ENCODE measurements at regions of chr22 and their contacts with region 1.

Region 1: DNA sequence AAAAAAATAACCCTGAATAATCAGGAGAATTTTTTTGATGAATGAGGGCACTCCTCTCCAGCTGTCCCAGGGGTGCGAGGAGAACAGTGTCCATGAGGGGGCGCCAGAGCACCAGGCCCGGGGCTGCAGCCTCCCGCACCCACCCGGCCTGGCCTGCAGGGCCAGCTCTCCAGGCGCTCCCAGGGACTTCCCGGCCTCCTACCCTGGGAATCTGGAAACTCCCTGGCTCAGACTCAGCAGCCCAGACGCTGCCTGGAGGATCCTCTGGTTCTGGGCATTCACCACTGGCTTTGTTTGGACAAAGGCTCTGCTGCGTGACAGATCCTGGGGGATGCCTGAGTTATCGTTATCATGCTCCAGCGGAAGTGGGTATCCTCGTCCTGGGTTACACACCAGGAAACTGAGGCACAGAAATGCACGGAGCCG is 31.0 kb downstream of the MCM5 start:
- H3K4me3 Mint-ChIP-seq: no peak overlapping the region
- H3K27ac Mint-ChIP-seq: no peak overlapping the region
- H3K4me1 Mint-ChIP-seq: no peaks in the 10 kb centered on the region
- H3K27me3 Mint-ChIP-seq: no peaks in the 10 kb centered on the region

Region 2: DNA sequence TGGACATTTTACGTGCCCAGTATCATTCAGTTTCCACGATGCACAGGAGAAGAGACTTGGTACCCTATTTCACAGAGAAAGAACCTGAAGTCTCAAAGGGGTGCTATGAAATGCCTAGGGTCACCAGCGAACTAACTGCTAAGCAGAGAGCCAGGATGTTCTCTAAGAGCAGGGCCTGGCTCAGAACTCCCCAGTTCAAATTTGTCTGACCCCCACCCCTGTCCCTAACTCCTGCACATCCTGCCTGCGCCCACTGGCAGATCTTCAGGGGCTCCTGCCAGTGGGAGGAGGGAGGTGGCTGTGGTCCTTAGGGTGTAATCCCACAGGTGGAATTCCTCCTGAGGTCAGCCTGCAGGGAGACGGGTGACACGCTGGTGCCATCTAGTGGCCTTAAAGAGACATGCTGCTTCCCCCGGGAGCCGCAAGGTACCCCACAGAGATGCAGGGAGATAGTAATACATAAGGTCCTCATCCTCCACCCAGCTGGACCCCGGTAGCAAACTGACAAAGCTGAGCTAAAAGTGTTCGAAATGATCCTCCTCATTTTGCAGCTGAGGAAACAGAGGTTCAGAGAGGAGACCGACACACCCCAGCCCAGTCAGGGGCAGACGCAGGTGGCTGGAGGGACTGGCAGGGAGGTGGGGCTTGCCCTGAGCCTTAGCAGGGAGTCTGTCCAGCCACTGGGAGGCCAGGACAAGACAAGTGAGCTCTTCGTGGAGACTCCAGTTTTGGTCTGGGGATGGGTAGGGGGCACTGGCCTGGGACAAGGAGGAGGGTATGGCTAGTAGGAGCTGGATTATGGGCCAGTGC is 152.2 kb after region 1 on chr22:
- intact Hi-C with region 1: loop called (anchors 2 kb)
- H3K4me3 Mint-ChIP-seq: no peak overlapping the region
- H3K27ac Mint-ChIP-seq: no peak overlapping the region
- H3K4me1 Mint-ChIP-seq: peaks cover 12% of the 10 kb centered on the region
- H3K27me3 Mint-ChIP-seq: peaks cover 10% of the 10 kb centered on the region

Measured in dendritic cell treated with granulocyte-macrophage colony-stimulating factor and Interleukin-4, amounts not matched to agents 40 ng/mL and 50 ng/mL, for 4 days (primary cell).